Activated CD4-positive, alpha-beta memory T cell treated with anti-CD3 and anti-CD28 coated beads for 36 hours (primary cell): ENCODE measurements at regions of chr6 and their contacts with region 1.

Region 1: DNA sequence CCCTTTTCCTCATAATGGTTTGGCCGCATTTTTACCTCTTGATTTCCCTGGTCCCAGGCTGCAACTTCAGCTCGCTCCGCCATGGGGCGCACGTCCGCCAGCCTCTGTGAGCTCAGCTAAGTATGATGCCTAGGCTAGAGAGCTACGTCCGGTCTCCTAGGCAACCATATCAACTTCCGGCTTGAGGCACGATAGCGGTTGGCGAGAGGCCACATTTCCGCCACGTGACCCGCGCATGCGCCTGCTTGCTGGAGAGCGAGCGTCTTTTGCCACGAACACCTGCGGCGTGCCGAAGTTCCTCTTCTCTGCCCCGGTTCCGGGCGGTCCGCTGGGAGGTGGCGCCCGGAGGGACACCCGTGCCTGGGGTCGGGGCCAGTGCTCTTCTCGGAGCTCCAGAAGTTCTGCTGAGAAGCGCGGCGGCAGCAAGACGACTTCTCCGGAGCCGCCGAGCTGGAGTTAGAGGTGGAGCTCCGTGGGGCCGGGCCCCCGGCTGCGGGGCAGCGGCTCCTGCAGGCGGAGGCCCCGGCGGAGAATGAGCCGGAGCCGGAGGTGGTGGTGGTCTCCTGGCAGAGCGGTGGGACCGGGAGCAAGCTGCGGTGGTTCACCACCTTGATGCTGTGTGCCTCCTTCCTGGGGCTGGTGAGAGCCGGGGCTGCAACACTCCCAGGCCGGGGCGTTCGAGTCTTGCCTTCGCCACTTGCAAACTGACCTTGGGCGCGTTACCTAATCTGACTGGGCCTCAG is 172.0 kb downstream of the SLC16A10 start:
- DNase-seq: peak; percentile 99
- H3K4me3 Mint-ChIP-seq: peak overlapping the region; percentile 76
- H3K27ac Mint-ChIP-seq: peak overlapping the region; percentile 79
- H3K4me1 Mint-ChIP-seq: peaks cover 31% of the 10 kb centered on the region
- H3K27me3 Mint-ChIP-seq: peaks cover 2% of the 10 kb centered on the region

Region 2: GRCh38 chr6:110933912-110934311 is 325.3 kb before region 1 on chr6:
- CTCF ChIA-PET with region 1: no interaction called
- POLR2A ChIA-PET with region 1: no interaction called
- intact Hi-C with region 1: no loop called
- DNase-seq: no peak
- H3K4me3 Mint-ChIP-seq: no peak overlapping the region
- H3K27ac Mint-ChIP-seq: no peak overlapping the region
- H3K4me1 Mint-ChIP-seq: peaks cover 5% of the 10 kb centered on the region
- H3K27me3 Mint-ChIP-seq: no peaks in the 10 kb centered on the region

Region 3: DNA sequence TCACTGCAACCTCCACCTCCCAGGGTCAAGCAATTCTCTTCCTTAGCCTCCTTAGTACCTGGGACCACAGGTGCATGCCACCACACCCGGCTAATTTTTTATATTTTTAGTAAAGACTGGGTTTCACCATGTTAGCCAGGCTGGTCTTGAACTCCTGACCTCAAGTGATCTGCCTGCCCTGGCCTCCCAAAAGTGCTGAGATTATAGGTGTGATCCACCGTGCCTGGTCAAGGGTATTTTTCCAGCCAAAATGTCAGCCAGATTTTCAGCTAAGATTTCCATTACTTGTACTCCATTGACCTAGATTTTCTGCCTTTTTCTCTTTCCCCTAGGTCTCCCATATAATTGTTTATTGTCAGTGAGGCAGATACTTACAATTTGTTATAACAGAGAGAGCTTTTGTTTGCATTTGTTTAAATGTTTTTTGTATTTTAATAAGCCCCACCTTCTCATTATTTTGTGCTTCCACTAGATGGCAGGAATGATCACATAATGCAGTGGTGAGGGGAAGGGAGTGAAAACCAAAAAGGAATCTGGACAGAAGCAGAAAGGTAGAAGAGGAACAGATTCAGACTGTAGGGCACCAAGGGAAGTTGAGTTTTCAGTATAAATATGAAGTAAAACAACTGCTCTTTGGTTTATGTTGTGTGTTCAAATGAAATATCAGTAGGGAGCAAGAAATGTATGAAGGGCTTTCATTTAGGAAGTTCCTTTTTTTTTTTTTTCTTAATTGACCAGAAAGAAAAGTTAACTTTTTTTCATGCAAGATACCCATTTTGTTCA is 247.7 kb before region 1 on chr6:
- CTCF ChIA-PET with region 1: interaction called, 11 read pairs
- POLR2A ChIA-PET with region 1: no interaction called
- intact Hi-C with region 1: no loop called
- DNase-seq: no peak
- H3K4me3 Mint-ChIP-seq: no peak overlapping the region
- H3K27ac Mint-ChIP-seq: no peak overlapping the region
- H3K4me1 Mint-ChIP-seq: peaks cover 4% of the 10 kb centered on the region
- H3K27me3 Mint-ChIP-seq: no peaks in the 10 kb centered on the region

Region 4: DNA sequence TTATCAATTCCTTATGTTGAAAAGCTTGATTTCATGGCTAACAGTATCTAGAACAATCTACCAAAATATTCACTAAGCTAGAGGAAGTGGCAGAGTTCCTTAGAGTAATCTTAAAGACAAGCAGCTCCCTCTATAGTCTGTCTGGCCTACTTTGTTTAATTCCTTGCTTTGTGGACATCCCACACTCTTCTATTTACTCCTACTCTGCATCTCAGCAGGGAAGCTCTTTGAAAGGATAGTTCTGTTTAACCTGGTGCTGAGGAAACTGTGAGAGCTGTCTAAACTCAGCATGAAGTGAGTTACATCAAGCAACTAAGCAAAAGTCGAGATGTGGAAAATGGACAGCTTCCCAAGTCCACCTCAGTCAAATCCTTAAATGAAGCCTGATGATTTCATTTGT is 219.5 kb after region 1 on chr6:
- CTCF ChIA-PET with region 1: interaction called, 52 read pairs
- POLR2A ChIA-PET with region 1: interaction called, 24 read pairs
- intact Hi-C with region 1: loop called (anchors 1 kb)
- DNase-seq: no peak
- H3K4me3 Mint-ChIP-seq: no peak overlapping the region
- H3K27ac Mint-ChIP-seq: no peak overlapping the region
- H3K4me1 Mint-ChIP-seq: peaks cover 40% of the 10 kb centered on the region
- H3K27me3 Mint-ChIP-seq: no peaks in the 10 kb centered on the region

Region 5: GRCh38 chr6:111565326-111566221 is 306.3 kb after region 1 on chr6:
- CTCF ChIA-PET with region 1: interaction called, 8 read pairs
- POLR2A ChIA-PET with region 1: no interaction called
- intact Hi-C with region 1: loop called (anchors 5 kb)
- DNase-seq: peak; percentile 43
- H3K4me3 Mint-ChIP-seq: no peak overlapping the region
- H3K27ac Mint-ChIP-seq: peak overlapping the region; percentile 48
- H3K4me1 Mint-ChIP-seq: peaks cover 53% of the 10 kb centered on the region
- H3K27me3 Mint-ChIP-seq: no peaks in the 10 kb centered on the region

Region 6: GRCh38 chr6:111642463-111643158 is 383.4 kb after region 1 on chr6:
- CTCF ChIA-PET with region 1: interaction called, 17 read pairs
- POLR2A ChIA-PET with region 1: interaction called, 4 read pairs
- intact Hi-C with region 1: loop called (anchors 1 kb)
- DNase-seq: peak; percentile 66
- H3K4me3 Mint-ChIP-seq: no peak overlapping the region
- H3K27ac Mint-ChIP-seq: no peak overlapping the region
- H3K4me1 Mint-ChIP-seq: no peaks in the 10 kb centered on the region
- H3K27me3 Mint-ChIP-seq: no peaks in the 10 kb centered on the region

Region 7: GRCh38 chr6:111997078-111997852 is 738.0 kb after region 1 on chr6:
- CTCF ChIA-PET with region 1: no interaction called
- POLR2A ChIA-PET with region 1: no interaction called
- intact Hi-C with region 1: loop called (anchors 2 kb)
- DNase-seq: peak; percentile 87
- H3K4me3 Mint-ChIP-seq: peak overlapping the region; percentile 48
- H3K27ac Mint-ChIP-seq: peak overlapping the region; percentile 28
- H3K4me1 Mint-ChIP-seq: peaks cover 48% of the 10 kb centered on the region
- H3K27me3 Mint-ChIP-seq: no peaks in the 10 kb centered on the region